GM12878 (cell line): ENCODE measurements at regions of chr22 and their contacts with region 1.

Region 1: DNA sequence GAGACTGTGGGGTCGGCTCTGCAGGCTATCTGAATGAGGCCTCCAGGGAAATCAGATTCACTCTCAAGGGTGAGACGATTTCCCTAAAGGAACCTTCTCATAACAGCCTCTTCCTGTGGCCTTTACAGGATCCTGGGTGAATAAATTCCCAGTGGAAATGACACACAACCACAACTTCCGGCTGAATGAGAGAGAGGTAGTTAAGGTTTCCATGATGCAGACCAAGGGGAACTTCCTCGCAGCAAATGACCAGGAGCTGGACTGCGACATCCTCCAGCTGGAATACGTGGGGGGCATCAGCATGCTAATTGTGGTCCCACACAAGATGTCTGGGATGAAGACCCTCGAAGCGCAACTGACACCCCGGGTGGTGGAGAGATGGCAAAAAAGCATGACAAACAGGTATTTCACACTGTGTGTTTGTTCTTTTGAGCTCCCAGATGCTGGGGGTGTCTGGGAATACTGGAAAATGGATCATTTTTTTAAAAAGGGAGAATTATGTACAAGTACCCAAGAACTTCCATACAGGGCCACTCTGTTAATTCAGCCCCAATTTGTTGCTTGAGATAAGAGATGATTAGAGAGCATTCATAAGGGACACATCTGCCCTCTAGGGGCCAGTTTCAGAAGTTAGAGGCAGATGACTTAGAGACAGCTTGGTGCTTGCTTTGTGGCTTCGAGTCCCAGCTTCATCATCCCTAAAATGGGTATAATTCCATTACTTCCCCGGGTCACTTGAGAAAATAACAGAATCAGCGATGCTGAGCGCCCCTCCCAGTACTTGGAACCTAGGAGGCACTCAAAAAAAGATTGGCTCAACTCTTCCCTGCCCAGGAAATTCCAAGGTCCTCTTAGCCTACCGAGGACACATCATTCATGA is 10.2 kb downstream of the SERPIND1 start:
- DNase-seq: peak; percentile 28
- ATAC-seq: peak; percentile 99
- H3K4me3 ChIP-seq: no peak overlapping the region
- H3K27ac ChIP-seq: peak overlapping the region; percentile 21
- H3K4me1 ChIP-seq: peaks cover 7% of the 10 kb centered on the region
- H3K27me3 ChIP-seq: no peaks in the 10 kb centered on the region
- CTCF ChIP-seq: peak; percentile 78 to 83 (median 81)
- EP300 ChIP-seq: no peak
- POLR2A ChIP-seq: no peak
- RAD21 ChIP-seq: peak; percentile 73

Region 2: GRCh38 chr22:20741634-20742581 is 42.2 kb before region 1 on chr22:
- CTCF ChIA-PET with region 1: interaction called, 19 read pairs
- POLR2A ChIA-PET with region 1: no interaction called
- RAD21 ChIA-PET with region 1: interaction called, 14 read pairs
- SMC1A ChIA-PET with region 1: interaction called, 6 read pairs
- in situ Hi-C with region 1: no loop called
- intact Hi-C with region 1: no loop called
- DNase-seq: no peak
- ATAC-seq: peak; percentile 61
- H3K4me3 ChIP-seq: no peak overlapping the region
- H3K27ac ChIP-seq: no peak overlapping the region
- H3K4me1 ChIP-seq: peaks cover 8% of the 10 kb centered on the region
- H3K27me3 ChIP-seq: no peaks in the 10 kb centered on the region
- CTCF ChIP-seq: peak; percentile 59 to 81 (median 66)
- EP300 ChIP-seq: no peak
- POLR2A ChIP-seq: no peak
- RAD21 ChIP-seq: peak; percentile 62

Region 3: GRCh38 chr22:20750461-20751184 is 33.5 kb before region 1 on chr22:
- CTCF ChIA-PET with region 1: interaction called, 28 read pairs
- POLR2A ChIA-PET with region 1: interaction called, 3 read pairs
- RAD21 ChIA-PET with region 1: interaction called, 27 read pairs
- SMC1A ChIA-PET with region 1: interaction called, 41 read pairs
- in situ Hi-C with region 1: no loop called
- intact Hi-C with region 1: no loop called
- DNase-seq: peak; percentile 59
- ATAC-seq: peak; percentile 87
- H3K4me3 ChIP-seq: no peak overlapping the region
- H3K27ac ChIP-seq: peak overlapping the region; percentile 76
- H3K4me1 ChIP-seq: peaks cover 50% of the 10 kb centered on the region
- H3K27me3 ChIP-seq: no peaks in the 10 kb centered on the region
- CTCF ChIP-seq: no peak
- EP300 ChIP-seq: peak in 1 of 2 experiments; percentile 62; a peak in 1 of 4 replicates
- POLR2A ChIP-seq: peak; percentile 22; the same call in 1 of the 2 replicates
- RAD21 ChIP-seq: no peak

Region 4: DNA sequence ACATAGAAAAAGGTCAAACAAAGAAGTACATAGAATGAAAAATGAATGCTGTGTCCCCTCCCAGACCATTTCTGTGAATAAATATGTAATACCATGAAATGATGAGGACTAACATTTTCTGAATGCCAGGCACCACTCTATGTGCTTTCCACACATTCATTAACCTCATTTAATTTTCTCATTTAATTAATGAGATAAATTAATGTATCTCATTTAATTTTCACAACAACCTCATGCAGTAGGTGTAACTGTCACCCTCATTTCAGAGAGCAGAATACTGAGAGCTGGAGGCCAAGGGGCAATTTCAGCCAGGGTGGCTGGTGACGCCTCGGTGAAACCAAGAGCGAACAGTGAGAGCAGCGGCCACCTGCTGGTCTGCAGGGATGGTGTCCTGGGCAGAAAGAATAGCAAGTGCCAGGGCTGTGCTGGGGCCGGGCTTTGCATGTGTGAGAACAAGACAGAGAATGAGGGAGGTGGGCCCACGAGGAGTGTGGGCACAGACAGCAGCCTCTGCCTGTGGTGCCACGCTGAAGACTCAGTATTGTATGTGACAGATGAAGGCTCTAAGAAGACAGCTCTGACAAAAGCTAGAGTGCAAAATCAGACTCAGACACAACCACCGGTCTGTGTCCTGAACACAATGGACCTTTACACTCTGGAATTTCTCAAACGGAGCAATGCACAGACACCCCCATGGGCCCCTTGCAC is 12.0 kb before region 1 on chr22:
- CTCF ChIA-PET with region 1: interaction called, 21 read pairs
- POLR2A ChIA-PET with region 1: no interaction called
- RAD21 ChIA-PET with region 1: no interaction called
- SMC1A ChIA-PET with region 1: no interaction called
- in situ Hi-C with region 1: no loop called
- intact Hi-C with region 1: no loop called
- DNase-seq: no peak
- ATAC-seq: 0 out of 3 replicates have a peak, but pooled peaks have one; percentile 35
- H3K4me3 ChIP-seq: no peak overlapping the region
- H3K27ac ChIP-seq: no peak overlapping the region
- H3K4me1 ChIP-seq: no peaks in the 10 kb centered on the region
- H3K27me3 ChIP-seq: no peaks in the 10 kb centered on the region
- CTCF ChIP-seq: 0 out of 6 replicates have a peak, but pooled peaks of 1 of the 3 experiments have one; percentile 20
- EP300 ChIP-seq: no peak
- POLR2A ChIP-seq: no peak
- RAD21 ChIP-seq: no peak

Region 5: DNA sequence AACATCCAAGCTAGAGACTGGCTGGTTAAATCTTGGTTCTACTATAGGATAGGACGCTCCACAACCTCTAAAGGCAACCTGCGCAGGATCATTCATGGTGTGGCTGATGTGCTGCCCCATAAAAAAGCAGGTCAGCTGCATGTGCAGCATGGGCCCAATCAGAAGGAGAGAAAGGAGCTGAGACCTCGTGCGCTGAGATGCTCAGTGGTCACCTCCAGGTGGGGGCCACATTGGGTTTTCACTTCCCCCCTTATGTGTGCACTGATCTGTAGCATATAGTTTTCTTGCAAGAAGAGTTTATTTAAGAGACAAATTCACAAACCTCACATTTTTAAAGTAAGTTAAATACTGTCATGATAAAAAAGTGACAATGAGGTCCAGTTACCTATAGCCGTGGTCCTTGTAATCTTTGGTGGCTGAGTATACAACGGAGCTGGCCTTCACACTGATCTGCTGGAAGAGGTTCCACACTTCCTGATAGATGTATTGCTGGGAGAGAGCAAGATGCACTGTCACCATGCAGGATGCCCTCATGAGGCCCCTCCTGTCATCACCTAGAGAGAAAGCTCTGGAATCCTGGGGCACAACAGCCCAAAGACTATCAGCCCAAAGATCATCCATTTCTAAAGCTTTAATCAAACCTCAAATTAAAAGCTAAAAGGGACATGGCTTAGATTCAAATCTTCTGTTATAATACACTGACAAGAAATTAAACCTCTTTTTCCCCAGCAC is 14.3 kb after region 1 on chr22:
- CTCF ChIA-PET with region 1: interaction called, 15 read pairs
- POLR2A ChIA-PET with region 1: no interaction called
- RAD21 ChIA-PET with region 1: interaction called, 3 read pairs
- SMC1A ChIA-PET with region 1: no interaction called
- in situ Hi-C with region 1: no loop called
- intact Hi-C with region 1: no loop called
- DNase-seq: no peak
- ATAC-seq: no peak
- H3K4me3 ChIP-seq: no peak overlapping the region
- H3K27ac ChIP-seq: no peak overlapping the region
- H3K4me1 ChIP-seq: no peaks in the 10 kb centered on the region
- H3K27me3 ChIP-seq: no peaks in the 10 kb centered on the region
- CTCF ChIP-seq: no peak
- EP300 ChIP-seq: no peak
- POLR2A ChIP-seq: no peak
- RAD21 ChIP-seq: no peak

Region 6: GRCh38 chr22:20822240-20822639 is 38.2 kb after region 1 on chr22:
- CTCF ChIA-PET with region 1: no interaction called
- POLR2A ChIA-PET with region 1: no interaction called
- RAD21 ChIA-PET with region 1: no interaction called
- SMC1A ChIA-PET with region 1: no interaction called
- in situ Hi-C with region 1: no loop called
- intact Hi-C with region 1: no loop called
- DNase-seq: no peak
- ATAC-seq: no peak
- H3K4me3 ChIP-seq: no peak overlapping the region
- H3K27ac ChIP-seq: no peak overlapping the region
- H3K4me1 ChIP-seq: no peaks in the 10 kb centered on the region
- H3K27me3 ChIP-seq: no peaks in the 10 kb centered on the region
- CTCF ChIP-seq: no peak
- EP300 ChIP-seq: no peak
- POLR2A ChIP-seq: no peak
- RAD21 ChIP-seq: no peak